ENCODE measurements at regions of chr5 and their contacts with region 1.

Region 1: GRCh38 chr5:115202952-115203351 is 33.2 kb upstream of the TRIM36 start:
- DNase-seq: no peak
- ATAC-seq: no peak
- H3K4me3 ChIP-seq: no peak overlapping the region
- H3K4me3 Mint-ChIP-seq: no peak overlapping the region
- H3K27ac ChIP-seq: no peak overlapping the region
- H3K27ac Mint-ChIP-seq: no peak overlapping the region
- H3K4me1 ChIP-seq: peaks cover 0 to under 1% of the 10 kb centered on the region in 2 donors
- H3K4me1 Mint-ChIP-seq: no peaks in the 10 kb centered on the region
- H3K27me3 ChIP-seq: no peaks in the 10 kb centered on the region
- H3K27me3 Mint-ChIP-seq: no peaks in the 10 kb centered on the region
- CTCF ChIP-seq: no peak

Region 2: GRCh38 chr5:115180165-115180709 is 22.7 kb before region 1 on chr5:
- CTCF ChIA-PET with region 1: no interaction called
- POLR2A ChIA-PET with region 1: no interaction called
- intact Hi-C with region 1: loop called (anchors 2 kb)
- DNase-seq: peak; percentile 71
- ATAC-seq: peak; percentile 75
- H3K4me3 ChIP-seq: peak overlapping the region; percentile 4 to 64 (median 47)
- H3K4me3 Mint-ChIP-seq: peak overlapping the region; percentile 89
- H3K27ac ChIP-seq: no peak overlapping the region
- H3K27ac Mint-ChIP-seq: no peak overlapping the region
- H3K4me1 ChIP-seq: peaks cover 19 to 27% of the 10 kb centered on the region in 2 donors
- H3K4me1 Mint-ChIP-seq: peaks cover 8% of the 10 kb centered on the region
- H3K27me3 ChIP-seq: peaks cover 5 to 87% (median 64%) of the 10 kb centered on the region in 4 experiments
- H3K27me3 Mint-ChIP-seq: peaks cover 86% of the 10 kb centered on the region
- CTCF ChIP-seq: no peak